Mammary epithelial cell (primary cell): ENCODE measurements at regions of chr1 and their contacts with region 1.

Region 1: DNA sequence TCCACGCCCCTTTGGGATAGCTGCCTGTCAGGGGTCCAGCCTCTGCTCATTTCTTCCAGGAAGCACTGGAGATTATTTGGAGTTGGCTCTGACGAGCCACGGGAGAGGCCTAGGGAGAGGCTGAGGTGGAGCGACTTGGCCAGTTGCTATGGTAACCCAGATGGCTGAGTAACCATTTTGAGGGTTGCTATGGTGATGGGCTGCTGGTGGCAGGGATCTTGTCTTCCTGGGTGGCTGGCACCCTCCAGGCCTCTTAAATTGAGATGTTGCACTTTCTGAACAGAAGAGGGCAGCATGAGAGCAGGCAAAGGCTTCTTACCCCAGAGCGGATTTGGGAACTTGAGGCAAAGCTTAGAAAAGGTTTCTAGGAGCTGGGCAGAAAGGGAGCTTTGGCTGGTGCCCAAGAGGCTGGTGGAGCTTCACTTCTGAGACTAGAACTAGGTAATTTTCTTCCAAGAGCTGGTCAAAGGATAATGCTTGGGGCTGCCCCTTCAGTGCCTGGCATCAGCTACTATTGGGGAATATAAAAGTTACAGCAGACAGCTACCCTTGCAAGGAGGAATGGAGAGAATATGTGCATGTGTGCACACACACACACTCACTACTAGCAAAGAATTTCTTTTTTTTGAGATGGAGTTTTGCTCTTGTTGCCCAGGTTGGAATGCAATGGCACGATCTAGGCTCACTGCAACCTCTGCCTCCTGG is 72.5 kb downstream of the NDUFS5 start:
- DNase-seq: peak; percentile 88
- H3K4me3 ChIP-seq: no peak overlapping the region
- H3K27ac ChIP-seq: peak overlapping the region; percentile 24
- H3K4me1 ChIP-seq: peaks cover 20% of the 10 kb centered on the region
- H3K27me3 ChIP-seq: no peaks in the 10 kb centered on the region
- CTCF ChIP-seq: peak; percentile 82 to 86

Region 2: GRCh38 chr1:38680801-38681510 is 417.7 kb before region 1 on chr1:
- CTCF ChIA-PET with region 1: no interaction called
- dilution Hi-C with region 1: no loop called
- in situ Hi-C with region 1: no loop called
- intact Hi-C with region 1: no loop called
- DNase-seq: no peak
- H3K4me3 ChIP-seq: no peak overlapping the region
- H3K27ac ChIP-seq: no peak overlapping the region
- H3K4me1 ChIP-seq: no peaks in the 10 kb centered on the region
- H3K27me3 ChIP-seq: peaks cover 5% of the 10 kb centered on the region
- CTCF ChIP-seq: no peak

Region 3: GRCh38 chr1:39147099-39148025 is 48.7 kb after region 1 on chr1:
- CTCF ChIA-PET with region 1: no interaction called
- dilution Hi-C with region 1: no loop called
- in situ Hi-C with region 1: no loop called
- intact Hi-C with region 1: no loop called
- DNase-seq: no peak
- H3K4me3 ChIP-seq: no peak overlapping the region
- H3K27ac ChIP-seq: no peak overlapping the region
- H3K4me1 ChIP-seq: peaks cover 41% of the 10 kb centered on the region
- H3K27me3 ChIP-seq: no peaks in the 10 kb centered on the region
- CTCF ChIP-seq: no peak

Region 4: DNA sequence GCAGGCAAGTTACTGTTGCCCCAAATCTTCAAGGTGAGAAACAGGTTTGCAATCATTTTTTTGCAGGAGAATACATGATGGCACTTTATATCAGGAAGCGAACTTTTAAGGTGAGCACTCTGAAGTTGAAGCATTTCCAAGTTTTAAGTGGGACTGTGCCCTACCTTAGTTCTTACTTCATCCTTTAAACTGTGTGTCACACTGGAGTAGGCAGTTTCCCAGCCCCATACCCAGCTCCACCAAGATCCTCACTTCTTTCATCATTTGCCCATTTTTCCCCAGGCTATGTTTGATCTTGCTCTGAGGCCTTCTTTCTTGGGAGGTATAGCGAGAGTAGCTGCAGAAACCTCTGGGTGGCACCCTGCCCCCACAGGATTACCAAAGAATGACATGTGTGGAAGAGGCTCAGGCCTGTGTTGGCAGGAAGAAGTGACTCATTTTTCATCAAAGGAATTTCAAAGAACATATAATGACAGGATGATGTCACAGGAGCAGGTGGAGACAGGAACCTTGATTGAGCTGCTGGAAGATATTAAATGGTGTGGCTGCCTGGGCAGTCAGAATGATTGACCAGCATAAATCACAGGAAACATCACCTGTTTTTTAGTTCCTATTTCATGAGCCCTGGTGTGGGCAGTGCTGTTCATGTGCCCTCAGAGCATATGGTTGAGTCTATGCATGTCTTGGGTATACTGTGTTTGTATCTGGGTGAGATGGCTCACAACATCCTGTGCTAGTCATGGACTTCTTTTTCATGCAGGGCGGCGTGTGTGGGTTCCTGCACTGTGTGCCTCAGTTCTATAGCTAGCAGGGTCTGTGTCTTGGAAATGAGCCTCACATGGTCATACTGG is 85.0 kb after region 1 on chr1:
- CTCF ChIA-PET with region 1: interaction called, 4 read pairs
- dilution Hi-C with region 1: no loop called
- in situ Hi-C with region 1: loop called (anchors 5 kb)
- intact Hi-C with region 1: loop called (anchors 1 kb)
- DNase-seq: peak; percentile 100
- H3K4me3 ChIP-seq: no peak overlapping the region
- H3K27ac ChIP-seq: peak overlapping the region; percentile 93
- H3K4me1 ChIP-seq: peaks cover 59% of the 10 kb centered on the region
- H3K27me3 ChIP-seq: no peaks in the 10 kb centered on the region
- CTCF ChIP-seq: peak; percentile 40 to 52

Region 5: DNA sequence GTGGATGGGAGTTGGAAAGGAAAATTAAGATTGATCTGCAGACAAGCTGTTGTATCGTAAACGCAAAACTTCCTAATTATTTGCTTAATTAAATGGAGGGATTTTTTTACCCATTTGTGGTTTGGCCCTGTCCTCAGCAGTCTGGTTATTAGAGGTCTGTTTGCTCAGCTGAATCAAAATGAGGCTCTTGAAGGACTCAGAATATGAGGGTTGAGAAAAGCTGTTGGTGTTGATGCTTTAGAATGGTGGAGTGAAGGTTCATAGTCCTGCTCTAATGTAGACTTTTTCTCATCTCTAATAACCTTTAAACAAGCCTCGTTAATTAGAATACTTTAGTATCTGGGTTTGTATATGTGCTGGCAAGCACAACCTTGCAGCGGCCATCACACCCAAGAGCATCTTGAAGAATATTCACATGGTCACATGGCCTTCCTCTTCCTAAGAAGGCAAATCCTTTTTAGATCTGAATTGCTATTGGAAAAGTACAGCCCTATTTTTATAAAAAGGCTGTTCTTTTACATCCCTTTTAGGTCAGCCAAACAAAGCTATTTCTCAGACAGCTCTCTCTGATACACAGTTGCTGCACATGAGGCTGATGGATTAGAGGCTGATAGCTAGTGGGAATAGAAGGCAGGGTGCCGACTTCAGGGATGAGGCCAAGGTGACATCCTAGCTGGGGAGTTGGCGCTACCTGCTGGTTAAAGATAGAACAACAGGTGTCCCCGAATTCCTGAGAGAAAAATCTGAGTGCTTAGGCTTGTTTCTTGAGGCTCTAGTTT is 159.6 kb after region 1 on chr1:
- CTCF ChIA-PET with region 1: interaction called, 9 read pairs
- dilution Hi-C with region 1: no loop called
- in situ Hi-C with region 1: loop called in 1 of 2 experiments (anchors 10 kb)
- intact Hi-C with region 1: loop called (anchors 1 kb)
- DNase-seq: peak; percentile 62
- H3K4me3 ChIP-seq: no peak overlapping the region
- H3K27ac ChIP-seq: no peak overlapping the region
- H3K4me1 ChIP-seq: peaks cover 11% of the 10 kb centered on the region
- H3K27me3 ChIP-seq: no peaks in the 10 kb centered on the region
- CTCF ChIP-seq: peak; percentile 85 to 88

Region 6: GRCh38 chr1:39408641-39409054 is 309.9 kb after region 1 on chr1:
- CTCF ChIA-PET with region 1: no interaction called
- dilution Hi-C with region 1: no loop called
- in situ Hi-C with region 1: no loop called
- intact Hi-C with region 1: loop called (anchors 1 kb)
- DNase-seq: peak; percentile 94
- H3K4me3 ChIP-seq: peak overlapping the region; percentile 63 to 81 (median 71)
- H3K27ac ChIP-seq: peak overlapping the region; percentile 76
- H3K4me1 ChIP-seq: peaks cover 57% of the 10 kb centered on the region
- H3K27me3 ChIP-seq: no peaks in the 10 kb centered on the region
- CTCF ChIP-seq: no peak

Region 7: DNA sequence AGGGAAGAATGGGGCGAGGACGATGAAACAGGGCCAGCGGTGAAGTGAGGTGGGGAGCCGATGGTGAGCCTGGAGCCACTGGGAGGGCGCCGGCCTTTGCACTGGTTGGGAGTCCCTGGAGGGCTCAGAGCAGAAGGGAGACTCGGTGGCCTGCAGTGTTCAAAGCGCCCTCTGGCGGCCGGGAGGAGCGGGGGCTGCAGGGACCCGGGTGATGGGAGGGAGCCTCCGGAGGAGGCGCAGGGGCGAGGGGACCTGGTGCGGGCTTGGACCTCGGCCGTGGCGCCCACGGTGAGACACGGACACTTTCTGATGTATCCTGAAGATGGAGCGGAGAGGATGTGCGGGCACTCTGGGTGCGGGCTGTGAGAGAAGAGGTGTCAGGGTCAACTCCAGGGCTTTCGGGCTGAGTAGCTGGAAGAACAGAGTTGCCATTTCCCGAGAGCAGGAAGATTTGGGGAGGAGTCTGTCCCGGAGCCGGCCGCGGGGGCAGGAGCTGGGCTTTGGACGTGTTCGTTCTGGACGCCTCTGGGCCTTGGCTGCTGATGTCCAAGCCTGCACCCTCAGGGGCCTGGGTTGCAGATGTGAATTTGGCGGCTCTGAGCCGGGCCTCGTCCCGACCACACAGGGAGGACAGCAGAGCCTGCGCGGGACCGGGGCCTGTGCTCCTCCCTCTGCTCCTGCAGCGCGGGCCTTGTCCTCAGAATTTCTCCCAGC is 511.1 kb after region 1 on chr1:
- CTCF ChIA-PET with region 1: no interaction called
- dilution Hi-C with region 1: no loop called
- in situ Hi-C with region 1: no loop called
- intact Hi-C with region 1: loop called (anchors 2 kb)
- DNase-seq: peak; percentile 15
- H3K4me3 ChIP-seq: no peak overlapping the region
- H3K27ac ChIP-seq: no peak overlapping the region
- H3K4me1 ChIP-seq: peaks cover 4% of the 10 kb centered on the region
- H3K27me3 ChIP-seq: no peaks in the 10 kb centered on the region
- CTCF ChIP-seq: peak; percentile 59 to 64